ENCODE measurements at regions of chr3 and their contacts with region 1.

Region 1: DNA sequence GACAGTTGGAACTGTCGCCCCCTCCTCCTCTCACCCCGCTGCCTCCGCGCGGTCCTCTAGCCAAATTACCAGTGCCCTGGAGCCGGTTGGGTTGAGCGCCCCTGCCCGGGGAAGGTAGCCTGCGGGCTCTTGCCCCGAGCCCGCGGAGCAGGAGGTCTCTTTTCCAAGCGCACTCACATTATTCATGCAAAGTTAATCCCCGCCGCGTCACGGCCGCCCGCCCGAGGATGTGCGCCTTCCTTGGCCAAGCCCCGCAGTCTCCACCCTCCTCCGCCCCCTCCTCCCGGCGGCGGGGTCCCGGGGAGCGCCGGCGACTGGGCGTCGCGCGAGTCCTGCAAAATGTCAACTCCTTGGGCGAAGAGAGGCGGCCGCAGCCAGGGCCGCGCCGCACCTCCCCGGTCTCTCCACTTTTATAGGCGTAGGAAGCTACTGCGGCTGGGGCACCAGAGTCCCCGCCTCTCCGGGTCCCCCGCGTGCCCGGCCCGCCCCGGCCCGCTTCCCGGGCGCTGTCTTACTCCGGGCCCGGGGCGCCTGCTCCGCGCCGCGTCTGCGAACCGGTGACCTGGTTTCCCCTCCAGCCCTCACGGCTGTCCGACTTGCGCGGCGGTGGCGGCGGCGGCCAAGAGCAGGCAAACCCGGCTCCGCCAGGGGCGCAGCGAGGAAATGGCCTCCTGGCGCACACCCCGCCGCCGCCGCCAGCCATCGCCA is at the start of gene THRB:
- DNase-seq: peak; percentile 86
- total RNA-seq, gene THRB: 27.2 TPM

Region 2: GRCh38 chr3:24264748-24265158 is 230.0 kb before region 1 on chr3:
- intact Hi-C with region 1: loop called (anchors 5 kb)
- DNase-seq: no peak

Region 3: DNA sequence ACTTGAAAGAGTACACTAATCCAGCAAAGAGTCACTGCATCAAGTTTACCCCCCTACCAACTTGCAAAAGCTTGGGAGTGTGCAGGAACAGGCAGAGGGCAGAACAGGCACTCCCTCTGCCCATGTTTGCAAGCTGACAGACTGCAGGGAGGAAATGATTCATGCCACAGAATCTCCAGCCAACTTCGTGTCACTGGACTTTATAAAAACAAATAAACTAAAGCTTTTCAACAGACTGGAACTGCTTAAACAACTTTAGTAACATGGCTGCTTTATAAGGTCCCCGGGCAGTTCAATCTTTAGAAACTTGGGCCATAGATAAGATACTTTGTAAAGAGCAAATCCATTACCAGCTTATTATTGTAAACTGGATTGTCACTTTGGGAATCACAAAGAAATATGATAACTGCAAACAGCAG is 129.6 kb before region 1 on chr3:
- intact Hi-C with region 1: loop called (anchors 5 kb)
- DNase-seq: no peak

Region 4: GRCh38 chr3:24440760-24441464 is 53.9 kb before region 1 on chr3:
- intact Hi-C with region 1: loop called (anchors 5 kb)
- DNase-seq: no peak

Region 5: GRCh38 chr3:24521420-24522145 is 26.8 kb after region 1 on chr3:
- intact Hi-C with region 1: loop called (anchors 2 kb)
- DNase-seq: peak; percentile 78

Region 6: DNA sequence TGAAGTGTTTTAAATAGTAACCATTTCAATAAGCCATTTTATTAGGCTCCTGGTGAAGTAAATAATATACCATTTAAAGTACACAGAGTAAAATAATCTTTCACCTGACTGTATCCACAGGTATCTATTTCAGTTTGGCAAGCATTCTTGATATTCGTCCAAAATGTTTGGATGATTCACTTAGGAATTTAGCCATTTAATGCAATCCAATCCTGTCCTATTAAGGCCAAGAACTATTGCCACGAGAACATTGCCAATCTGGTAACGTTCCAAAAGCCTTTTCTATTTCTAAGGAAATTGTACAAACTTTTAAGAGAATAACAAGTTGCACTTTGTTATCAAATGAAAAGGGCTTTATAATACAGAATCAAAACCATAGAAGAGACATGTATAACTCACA is 209.7 kb after region 1 on chr3:
- intact Hi-C with region 1: no loop called
- DNase-seq: no peak